IMR-90 (cell line): ENCODE measurements at regions of chr1 and their contacts with region 1.

Region 1: DNA sequence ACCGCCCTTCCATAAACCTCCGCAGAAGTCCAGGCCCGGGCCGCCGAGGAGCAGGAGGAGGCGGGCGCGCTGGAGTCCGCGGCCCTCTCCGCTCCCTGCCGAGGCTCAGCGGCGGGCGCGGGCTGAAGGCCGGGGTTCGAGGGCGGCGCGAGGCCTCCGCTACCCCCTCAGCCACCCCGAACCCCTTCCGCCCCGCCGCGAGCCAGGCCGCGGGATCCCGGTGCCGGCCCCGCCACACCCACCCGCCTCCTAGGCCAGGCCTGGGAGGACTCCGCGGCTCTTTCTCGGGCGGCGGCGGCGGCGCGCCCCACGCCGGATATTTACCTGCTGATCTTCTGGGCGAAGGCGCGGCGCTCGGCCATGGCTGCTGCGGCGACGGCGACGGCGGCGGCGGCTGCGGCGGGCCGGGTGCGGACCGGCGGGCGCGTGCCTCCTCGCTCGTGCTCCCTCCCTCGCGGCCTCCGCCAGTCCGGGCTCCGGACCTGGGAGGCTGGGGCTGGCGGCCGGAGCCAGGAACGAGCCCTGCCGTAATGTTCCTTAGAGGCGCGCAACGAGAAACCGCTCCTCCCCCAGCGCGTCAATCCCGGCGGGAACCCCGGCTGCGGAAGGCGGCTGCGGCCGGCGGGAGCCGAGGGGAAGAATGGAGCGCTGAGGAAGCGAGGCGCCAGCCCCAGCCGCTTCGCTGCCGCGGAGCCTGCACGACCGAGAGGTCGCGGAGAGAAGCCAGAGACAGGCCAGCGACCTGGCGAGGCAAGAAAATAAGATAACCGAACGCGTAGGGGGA is at the start of gene DOCK7:
- DNase-seq: peak; percentile 74
- ATAC-seq: peak; percentile 79
- H3K4me3 ChIP-seq: peak within 1 kb of the TSS; percentile 64
- H3K27ac ChIP-seq: peak within 1 kb of the TSS; percentile 87
- H3K4me1 ChIP-seq: peaks cover 19% of the 10 kb centered on the region
- H3K27me3 ChIP-seq: no peaks in the 10 kb centered on the region
- CTCF ChIP-seq: no peak
- POLR2A ChIP-seq: peak; percentile 44; the same call in 1 of the 2 replicates
- RAD21 ChIP-seq: no peak
- total RNA-seq, gene DOCK7: 97.7 and 108 TPM in 2 replicates

Region 2: DNA sequence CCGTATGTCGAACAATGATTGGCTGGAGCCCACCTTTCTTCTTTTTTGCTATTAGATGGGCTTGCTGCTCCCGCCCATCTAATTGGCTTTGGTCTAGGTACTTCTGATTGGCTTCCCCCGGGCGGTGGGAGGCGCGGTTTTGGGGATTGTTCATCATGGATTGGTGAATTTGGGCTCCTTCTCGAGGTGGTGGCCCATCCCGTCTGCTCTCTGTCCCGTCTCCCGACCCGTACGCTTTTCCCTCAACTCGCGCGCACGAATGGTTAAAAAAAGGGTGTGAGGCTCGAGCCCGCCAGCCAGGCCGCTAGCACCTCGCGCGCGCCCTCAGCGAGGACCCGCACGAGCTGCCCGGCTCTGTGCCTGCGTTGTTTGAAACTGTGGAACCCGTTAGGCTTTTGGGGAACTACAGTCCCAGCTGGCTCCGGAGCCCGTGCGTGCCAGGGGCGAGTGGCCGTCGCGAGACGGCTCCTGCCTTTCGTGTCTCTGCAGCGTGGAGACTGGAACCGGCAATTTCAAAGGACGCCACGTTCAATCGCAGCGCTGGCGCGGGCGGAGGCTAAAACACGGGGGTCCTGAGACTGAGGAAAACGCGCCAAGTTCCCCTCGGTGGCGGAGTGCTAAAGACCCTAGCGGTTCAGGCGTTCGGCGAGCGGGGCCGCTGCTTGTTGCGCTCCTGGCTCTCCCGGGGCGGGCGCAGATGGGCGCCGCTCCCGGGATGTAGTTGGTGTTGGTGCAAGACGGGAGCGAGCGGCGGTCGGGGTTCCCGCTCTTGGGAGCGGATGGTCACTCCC is 251.4 kb before region 1 on chr1 and contains the start of gene USP1:
- CTCF ChIA-PET with region 1: no interaction called
- POLR2A ChIA-PET with region 1: no interaction called
- dilution Hi-C with region 1: no loop called
- in situ Hi-C with region 1: no loop called
- intact Hi-C with region 1: loop called (anchors 2 kb)
- DNase-seq: peak; percentile 100
- ATAC-seq: peak; percentile 91
- H3K4me3 ChIP-seq: peak within 1 kb of the TSS; percentile 82
- H3K27ac ChIP-seq: peak within 1 kb of the TSS; percentile 99
- H3K4me1 ChIP-seq: peaks cover 3% of the 10 kb centered on the region; the same call in 1 of the 2 replicates
- H3K27me3 ChIP-seq: peaks cover under 1% of the 10 kb centered on the region; the same call in 1 of the 2 replicates
- CTCF ChIP-seq: no peak
- POLR2A ChIP-seq: peak; percentile 41; the same call in 1 of the 2 replicates
- RAD21 ChIP-seq: no peak
- total RNA-seq, gene USP1: 9.7 and 26.1 TPM in 2 replicates

Region 3: DNA sequence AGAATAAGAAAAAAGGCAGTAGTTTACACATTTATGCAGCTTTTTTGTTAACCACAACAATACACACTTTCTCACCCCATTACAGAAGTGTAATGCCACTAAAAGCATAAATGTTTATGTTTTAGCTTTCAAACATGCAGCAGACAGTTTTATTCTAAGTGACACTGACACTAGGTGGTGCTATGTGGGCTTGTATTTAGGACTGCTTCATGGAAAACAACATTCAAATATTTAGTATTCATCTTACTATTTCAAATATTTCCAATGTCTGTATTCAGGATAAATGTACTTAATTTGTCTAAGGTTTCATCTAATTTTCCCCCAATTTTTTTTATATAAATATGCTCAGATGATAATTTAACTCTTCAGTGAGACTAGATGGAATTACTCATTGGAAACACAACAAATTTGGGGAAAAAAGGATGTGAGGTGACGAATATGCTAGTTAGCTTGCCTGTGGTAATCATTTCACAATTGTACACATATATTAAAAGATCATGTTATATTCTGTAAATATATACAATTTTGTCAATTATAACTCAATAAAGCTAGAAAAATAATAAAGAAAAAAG is 179.8 kb before region 1 on chr1:
- CTCF ChIA-PET with region 1: interaction called, 3 read pairs
- POLR2A ChIA-PET with region 1: no interaction called
- dilution Hi-C with region 1: no loop called
- in situ Hi-C with region 1: no loop called
- intact Hi-C with region 1: loop called (anchors 5 kb)
- DNase-seq: peak; percentile 65
- ATAC-seq: peak; percentile 56
- H3K4me3 ChIP-seq: no peak overlapping the region
- H3K27ac ChIP-seq: no peak overlapping the region
- H3K4me1 ChIP-seq: no peaks in the 10 kb centered on the region
- H3K27me3 ChIP-seq: no peaks in the 10 kb centered on the region
- CTCF ChIP-seq: peak; percentile 63
- POLR2A ChIP-seq: no peak
- RAD21 ChIP-seq: peak; percentile 52

Region 4: GRCh38 chr1:62530516-62531154 is 157.5 kb before region 1 on chr1:
- CTCF ChIA-PET with region 1: no interaction called
- POLR2A ChIA-PET with region 1: no interaction called
- dilution Hi-C with region 1: no loop called
- in situ Hi-C with region 1: no loop called
- intact Hi-C with region 1: loop called (anchors 5 kb)
- DNase-seq: peak; percentile 40
- ATAC-seq: peak; percentile 78
- H3K4me3 ChIP-seq: no peak overlapping the region
- H3K27ac ChIP-seq: no peak overlapping the region
- H3K4me1 ChIP-seq: no peaks in the 10 kb centered on the region
- H3K27me3 ChIP-seq: no peaks in the 10 kb centered on the region
- CTCF ChIP-seq: peak; percentile 56
- POLR2A ChIP-seq: no peak
- RAD21 ChIP-seq: peak; percentile 59

Region 5: GRCh38 chr1:62652387-62652786 is 35.7 kb before region 1 on chr1:
- CTCF ChIA-PET with region 1: no interaction called
- POLR2A ChIA-PET with region 1: no interaction called
- dilution Hi-C with region 1: no loop called
- in situ Hi-C with region 1: no loop called
- intact Hi-C with region 1: no loop called
- DNase-seq: no peak
- ATAC-seq: no peak
- H3K4me3 ChIP-seq: no peak overlapping the region
- H3K27ac ChIP-seq: no peak overlapping the region
- H3K4me1 ChIP-seq: no peaks in the 10 kb centered on the region
- H3K27me3 ChIP-seq: no peaks in the 10 kb centered on the region
- CTCF ChIP-seq: no peak
- POLR2A ChIP-seq: no peak
- RAD21 ChIP-seq: no peak

Region 6: GRCh38 chr1:62676611-62677356 is 11.3 kb before region 1 on chr1:
- CTCF ChIA-PET with region 1: interaction called, 11 read pairs
- POLR2A ChIA-PET with region 1: no interaction called
- dilution Hi-C with region 1: no loop called
- in situ Hi-C with region 1: no loop called
- intact Hi-C with region 1: no loop called
- DNase-seq: peak; percentile 66
- ATAC-seq: peak; percentile 82
- H3K4me3 ChIP-seq: no peak overlapping the region
- H3K27ac ChIP-seq: peak overlapping the region; percentile 82; the same call in 1 of the 2 replicates
- H3K4me1 ChIP-seq: peaks cover 9% of the 10 kb centered on the region
- H3K27me3 ChIP-seq: no peaks in the 10 kb centered on the region
- CTCF ChIP-seq: no peak
- POLR2A ChIP-seq: no peak
- RAD21 ChIP-seq: no peak

Region 7: DNA sequence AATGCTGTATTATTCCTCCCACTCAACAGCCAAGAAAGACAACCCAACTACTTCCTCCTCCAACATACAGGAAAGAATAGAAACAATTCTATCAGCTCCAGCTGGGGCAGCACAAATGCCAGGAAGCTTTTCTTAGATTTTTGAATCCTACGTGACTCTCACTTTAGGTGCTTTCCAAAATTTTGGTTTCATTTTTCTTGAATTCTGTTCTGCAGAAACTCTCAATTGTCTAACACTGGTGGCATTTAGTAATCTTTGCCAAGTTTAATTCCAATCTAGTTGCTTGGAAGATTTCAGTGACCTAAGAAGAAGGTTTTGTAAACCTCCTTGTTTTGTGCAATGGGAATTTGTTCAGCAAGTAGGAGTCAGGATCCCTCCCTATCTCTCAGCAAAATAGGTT is 37.2 kb after region 1 on chr1:
- CTCF ChIA-PET with region 1: no interaction called
- POLR2A ChIA-PET with region 1: no interaction called
- dilution Hi-C with region 1: no loop called
- in situ Hi-C with region 1: no loop called
- intact Hi-C with region 1: loop called (anchors 1 kb)
- DNase-seq: peak; percentile 94
- ATAC-seq: peak; percentile 70
- H3K4me3 ChIP-seq: peak overlapping the region; percentile 36; the same call in 1 of the 2 replicates
- H3K27ac ChIP-seq: peak overlapping the region; percentile 54; the same call in 1 of the 2 replicates
- H3K4me1 ChIP-seq: peaks cover 11% of the 10 kb centered on the region
- H3K27me3 ChIP-seq: no peaks in the 10 kb centered on the region
- CTCF ChIP-seq: no peak
- POLR2A ChIP-seq: no peak
- RAD21 ChIP-seq: no peak

Region 8: DNA sequence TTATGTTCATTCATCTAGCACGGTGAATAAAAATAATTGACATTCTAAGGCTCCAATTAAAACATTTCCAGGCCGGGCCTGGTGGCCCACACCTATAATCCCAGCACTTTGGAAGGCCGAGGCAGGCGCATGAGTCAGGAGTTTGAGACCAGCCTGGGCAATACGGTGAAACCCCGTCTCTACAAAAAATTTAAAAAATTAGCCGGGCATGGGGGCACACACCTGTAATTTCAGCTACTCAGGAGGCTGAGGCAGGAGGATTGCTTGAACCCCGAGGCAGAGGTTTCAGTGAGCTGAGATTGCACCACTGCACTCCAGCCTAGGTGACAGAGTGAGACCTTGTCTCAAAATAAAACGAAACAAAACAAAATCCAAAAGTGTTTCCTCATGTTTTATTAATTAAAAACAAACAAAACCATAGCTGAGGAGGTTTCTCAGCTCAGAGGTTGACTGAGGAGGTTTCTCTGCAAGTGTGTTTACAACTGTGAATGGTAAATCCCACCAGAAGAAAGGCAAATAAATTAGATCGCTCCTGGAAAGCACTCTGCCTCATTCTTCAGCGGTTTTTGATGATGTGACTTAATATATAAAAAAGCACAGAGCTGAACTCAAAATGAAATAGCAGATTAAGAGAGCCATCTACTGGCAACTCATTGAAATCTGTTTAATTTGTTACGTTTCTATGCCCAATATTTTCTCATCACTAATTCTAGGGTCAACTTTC is 58.2 kb after region 1 on chr1:
- CTCF ChIA-PET with region 1: interaction called, 3 read pairs
- POLR2A ChIA-PET with region 1: no interaction called
- dilution Hi-C with region 1: no loop called
- in situ Hi-C with region 1: no loop called
- intact Hi-C with region 1: loop called (anchors 1 kb)
- DNase-seq: peak; percentile 70
- ATAC-seq: peak; percentile 69
- H3K4me3 ChIP-seq: no peak overlapping the region; the same call in 1 of the 2 replicates
- H3K27ac ChIP-seq: no peak overlapping the region
- H3K4me1 ChIP-seq: peaks cover 4% of the 10 kb centered on the region; the same call in 1 of the 2 replicates
- H3K27me3 ChIP-seq: no peaks in the 10 kb centered on the region
- CTCF ChIP-seq: peak; percentile 71
- POLR2A ChIP-seq: no peak
- RAD21 ChIP-seq: peak; percentile 93